CD8-positive, alpha-beta memory T cell (primary cell): ENCODE measurements at regions of chr11 and their contacts with region 1.

Region 1: GRCh38 chr11:93784152-93784934 is at the start of gene MED17:
- DNase-seq: peak; percentile 82 to 91 (median 84)
- H3K4me3 ChIP-seq: peak within 1 kb of the TSS; percentile 86
- H3K4me3 Mint-ChIP-seq: peak within 1 kb of the TSS; percentile 92 to 100 (median 97)
- H3K27ac ChIP-seq: peak within 1 kb of the TSS; percentile 93
- H3K27ac Mint-ChIP-seq: peak within 1 kb of the TSS; percentile 83 to 98 (median 92)
- H3K4me1 ChIP-seq: peaks cover 31% of the 10 kb centered on the region
- H3K4me1 Mint-ChIP-seq: peaks cover 48 to 57% (median 53%) of the 10 kb centered on the region in 3 donors
- H3K27me3 ChIP-seq: no peaks in the 10 kb centered on the region
- H3K27me3 Mint-ChIP-seq: no peaks in the 10 kb centered on the region
- total RNA-seq, gene MED17: 39.4 to 42.8 TPM

Region 2: GRCh38 chr11:93741094-93741881 is 43.1 kb before region 1 on chr11 and contains the starts of genes C11orf54 and TAF1D:
- CTCF ChIA-PET with region 1: interaction called, 32 read pairs
- POLR2A ChIA-PET with region 1: interaction called, 93 read pairs
- DNase-seq: peak; percentile 95 to 98 (median 96)
- H3K4me3 ChIP-seq: peak within 1 kb of the TSS; percentile 95
- H3K4me3 Mint-ChIP-seq: peak within 1 kb of the TSS; percentile 98 to 100 (median 100)
- H3K27ac ChIP-seq: peak within 1 kb of the TSS; percentile 94
- H3K27ac Mint-ChIP-seq: peak within 1 kb of the TSS; percentile 90 to 100 (median 100)
- H3K4me1 ChIP-seq: peaks cover 52% of the 10 kb centered on the region
- H3K4me1 Mint-ChIP-seq: peaks cover 65 to 78% (median 73%) of the 10 kb centered on the region in 3 donors
- H3K27me3 ChIP-seq: no peaks in the 10 kb centered on the region
- H3K27me3 Mint-ChIP-seq: peaks cover 0 to 5% of the 10 kb centered on the region in 2 donors
- total RNA-seq, gene C11orf54: 14.9 to 16.8 TPM
- total RNA-seq, gene TAF1D: 249 to 265 TPM